ENCODE measurements at regions of chr6 and their contacts with region 1.

Region 1: DNA sequence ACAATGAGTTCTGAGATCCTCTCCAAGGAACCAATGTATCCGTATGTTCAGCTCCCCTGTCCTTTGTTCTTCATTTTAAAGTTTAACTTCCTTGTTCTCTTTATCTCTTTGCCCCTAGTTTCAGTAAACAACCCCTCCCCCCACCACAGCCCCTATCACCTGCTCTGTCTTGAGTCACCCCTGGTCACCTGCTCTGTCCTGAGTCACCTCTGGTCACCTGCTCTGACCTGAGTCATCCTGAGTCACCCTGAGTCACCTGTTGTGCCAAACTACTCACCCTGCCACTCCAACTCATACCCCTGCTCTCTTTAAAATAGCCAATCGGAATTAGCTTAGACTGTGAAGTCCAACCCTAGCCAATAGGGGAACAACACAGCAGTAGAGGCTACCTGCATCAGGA is 288.7 kb upstream of the CDYL start:
- DNase-seq: peak; percentile 80
- H3K4me3 ChIP-seq: no peak overlapping the region
- H3K27ac ChIP-seq: no peak overlapping the region
- H3K4me1 ChIP-seq: peaks cover 5% of the 10 kb centered on the region
- H3K27me3 ChIP-seq: no peaks in the 10 kb centered on the region
- CTCF ChIP-seq: no peak

Region 2: GRCh38 chr6:4533576-4533975 is 46.0 kb after region 1 on chr6:
- CTCF ChIA-PET with region 1: no interaction called
- dilution Hi-C with region 1: no loop called
- in situ Hi-C with region 1: no loop called
- intact Hi-C with region 1: loop called (anchors 1 kb)
- DNase-seq: no peak
- H3K4me3 ChIP-seq: no peak overlapping the region
- H3K27ac ChIP-seq: no peak overlapping the region
- H3K4me1 ChIP-seq: no peaks in the 10 kb centered on the region
- H3K27me3 ChIP-seq: no peaks in the 10 kb centered on the region
- CTCF ChIP-seq: no peak